ENCODE measurements at regions of chr11 and their contacts with region 1.

Region 1: GRCh38 chr11:94183886-94184264 is 55.2 kb downstream of the PANX1 start:
- DNase-seq: no peak
- H3K4me3 ChIP-seq: no peak overlapping the region
- CTCF ChIP-seq: peak; percentile 86

Region 2: GRCh38 chr11:93921695-93922468 is 262.0 kb before region 1 on chr11:
- CTCF ChIA-PET with region 1: interaction called, 41 read pairs
- POLR2A ChIA-PET with region 1: no interaction called
- DNase-seq: no peak
- H3K4me3 ChIP-seq: no peak overlapping the region
- CTCF ChIP-seq: peak; percentile 82

Region 3: GRCh38 chr11:93986716-93987115 is 197.2 kb before region 1 on chr11:
- CTCF ChIA-PET with region 1: no interaction called
- POLR2A ChIA-PET with region 1: no interaction called
- DNase-seq: no peak
- H3K4me3 ChIP-seq: no peak overlapping the region
- CTCF ChIP-seq: no peak

Region 4: DNA sequence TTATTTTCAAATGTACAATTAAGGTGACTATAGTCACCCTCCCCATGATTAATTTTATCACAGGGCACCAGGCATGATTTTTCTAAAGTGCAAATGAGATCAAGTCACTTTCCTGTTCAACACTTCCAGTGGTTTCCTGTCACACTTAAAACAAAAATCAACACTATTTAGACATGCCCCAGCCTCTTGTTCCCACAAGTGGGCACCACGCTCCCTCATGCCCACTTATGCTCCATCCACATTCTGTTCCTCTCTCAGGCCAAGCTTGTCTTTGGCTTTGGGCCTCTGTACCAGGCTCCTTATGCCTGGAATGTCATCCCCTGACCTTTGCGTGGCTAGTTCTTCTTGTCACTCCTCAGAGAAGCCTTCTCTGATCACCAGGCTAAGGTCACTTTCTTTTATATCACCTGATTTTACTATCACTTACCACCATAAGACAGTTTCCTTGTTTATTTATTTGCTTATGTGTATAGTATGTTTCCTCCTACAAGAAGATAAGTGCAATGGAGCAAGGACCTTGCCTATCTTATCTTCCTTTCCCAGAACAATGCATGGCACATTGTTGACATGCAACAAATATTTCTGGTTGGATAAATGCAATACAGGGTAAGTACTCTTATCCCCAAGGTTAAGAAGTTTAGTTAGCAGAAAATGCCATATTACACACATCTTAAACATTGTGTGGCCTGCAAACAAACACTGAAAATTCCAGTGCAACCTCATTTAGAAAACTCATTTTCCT is 106.2 kb before region 1 on chr11:
- CTCF ChIA-PET with region 1: no interaction called
- POLR2A ChIA-PET with region 1: no interaction called
- DNase-seq: no peak
- H3K4me3 ChIP-seq: no peak overlapping the region
- CTCF ChIP-seq: no peak

Region 5: GRCh38 chr11:94142308-94143281 is 41.3 kb before region 1 on chr11:
- CTCF ChIA-PET with region 1: interaction called, 10 read pairs
- POLR2A ChIA-PET with region 1: no interaction called
- DNase-seq: no peak
- H3K4me3 ChIP-seq: no peak overlapping the region
- CTCF ChIP-seq: no peak

Region 6: GRCh38 chr11:94171693-94172440 is 12.0 kb before region 1 on chr11:
- CTCF ChIA-PET with region 1: interaction called, 88 read pairs
- POLR2A ChIA-PET with region 1: interaction called, 8 read pairs
- DNase-seq: no peak
- H3K4me3 ChIP-seq: no peak overlapping the region
- CTCF ChIP-seq: peak; percentile 81

Region 7: DNA sequence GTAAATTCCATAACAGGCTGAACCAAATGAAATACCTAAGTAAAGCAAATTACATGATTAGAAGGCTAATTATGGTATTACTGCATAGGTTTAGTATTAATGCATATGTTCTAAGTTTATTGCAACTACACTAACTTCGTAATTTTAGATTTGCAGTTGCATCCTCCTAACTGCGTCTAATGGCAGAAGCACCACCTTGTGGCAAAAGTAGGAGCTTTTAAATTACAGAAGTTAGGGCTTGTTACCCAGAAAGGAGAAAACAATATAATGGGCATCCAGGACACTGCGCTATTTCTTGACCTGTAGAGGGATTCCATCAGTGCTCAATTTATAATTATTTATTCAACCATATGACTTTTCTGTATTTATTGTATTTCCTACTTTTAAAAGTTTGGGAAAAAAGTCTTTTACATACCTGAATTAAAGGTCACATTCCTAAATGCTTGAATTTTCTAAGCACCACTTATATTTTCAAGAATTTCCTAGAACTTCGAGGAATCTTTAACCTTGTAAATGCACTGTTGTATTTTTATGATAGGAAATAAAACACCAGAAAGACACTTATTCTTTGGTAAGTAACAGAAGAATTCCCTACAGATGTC is 233.6 kb after region 1 on chr11:
- CTCF ChIA-PET with region 1: interaction called, 141 read pairs
- POLR2A ChIA-PET with region 1: no interaction called
- DNase-seq: peak; percentile 14
- H3K4me3 ChIP-seq: no peak overlapping the region
- CTCF ChIP-seq: peak; percentile 51

Measured in AG04449 (cell line).